Cardiac septum (tissue), 1 donor: ENCODE measurements at regions of chr3 and their contacts with region 1.

Region 1: GRCh38 chr3:8441969-8442559 is 59.6 kb upstream of the LMCD1 start:
- DNase-seq: no peak

Region 2: GRCh38 chr3:8223766-8224165 is 218.3 kb before region 1 on chr3:
- intact Hi-C with region 1: no loop called
- DNase-seq: no peak

Region 3: DNA sequence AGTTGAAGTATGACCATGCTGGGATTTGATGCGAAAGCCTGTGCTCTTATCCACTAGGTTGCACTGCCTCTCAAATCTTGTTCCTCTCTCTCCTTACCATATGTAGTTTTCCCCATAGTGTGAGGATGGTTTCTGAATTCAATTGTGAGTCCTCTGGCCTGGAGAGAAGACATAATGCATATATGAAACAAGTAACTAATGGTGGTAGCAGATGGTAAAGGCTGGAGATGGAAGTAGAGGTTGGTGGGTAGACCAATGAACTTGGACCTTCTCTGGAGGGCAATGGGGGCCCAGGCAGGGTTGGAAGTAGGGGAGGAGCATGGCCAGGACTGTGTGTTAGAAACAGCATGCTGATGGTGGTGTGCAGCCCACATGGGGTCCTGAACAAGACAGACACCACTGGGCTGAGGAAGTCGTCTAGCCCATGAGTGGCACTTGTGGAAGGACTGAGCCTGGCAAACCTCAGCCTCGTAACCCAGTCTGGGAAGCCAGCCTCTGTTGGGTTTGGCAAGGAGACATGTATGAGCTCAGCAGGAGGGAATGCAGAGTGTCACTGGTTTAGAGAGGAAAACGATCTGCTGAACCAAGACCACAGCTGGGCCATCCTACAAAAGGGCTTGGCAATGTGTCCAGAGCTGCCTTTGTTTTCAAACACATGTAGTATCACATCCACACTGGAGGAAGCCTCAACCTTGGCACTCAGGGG is 41.0 kb after region 1 on chr3:
- intact Hi-C with region 1: loop called (anchors 2 kb)
- DNase-seq: peak; percentile 84

Region 4: DNA sequence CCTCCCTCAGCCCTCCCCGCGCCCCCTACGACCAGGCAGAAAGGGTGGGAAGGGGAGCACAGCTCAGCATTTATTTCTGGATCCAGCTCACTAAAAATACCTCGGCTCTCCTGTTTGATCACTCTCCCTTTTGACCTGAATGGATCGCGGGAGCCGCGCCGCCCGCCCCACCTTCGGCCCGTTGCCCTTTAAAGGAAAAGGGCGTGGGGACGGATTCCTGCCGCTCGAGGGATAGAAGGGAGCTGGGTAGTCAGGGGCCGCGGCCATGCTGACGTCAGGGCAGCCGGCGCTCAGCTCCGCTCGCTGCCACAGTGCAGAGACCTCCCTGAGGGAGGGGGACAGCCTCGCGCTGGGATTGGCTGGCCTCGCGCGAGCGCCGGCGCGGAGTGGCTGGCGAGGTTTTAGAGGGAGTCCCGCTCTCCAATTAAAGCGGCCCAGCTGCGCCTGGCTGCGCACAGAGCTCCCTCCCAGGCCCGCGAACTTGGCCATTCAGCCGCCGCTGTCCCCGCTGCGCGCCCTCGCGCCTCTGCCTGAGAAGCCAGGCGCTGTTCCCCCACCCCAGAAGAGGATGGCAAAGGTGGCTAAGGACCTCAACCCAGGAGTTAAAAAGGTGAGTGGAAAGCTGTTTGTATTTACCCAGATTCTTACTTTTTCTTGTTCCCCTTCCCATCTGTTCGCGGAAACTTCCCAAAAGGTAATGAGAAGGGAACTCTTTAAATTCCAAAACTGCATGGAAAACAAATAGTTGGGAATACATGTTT is 59.5 kb after region 1 on chr3 and contains the start of gene LMCD1:
- intact Hi-C with region 1: loop called (anchors 1 kb)
- DNase-seq: peak; percentile 96
- total RNA-seq, gene LMCD1: 57.6 TPM

Region 5: GRCh38 chr3:8560366-8561007 is 118.4 kb after region 1 on chr3:
- intact Hi-C with region 1: loop called (anchors 5 kb)
- DNase-seq: no peak

Region 6: GRCh38 chr3:8607234-8608040 is 165.4 kb after region 1 on chr3:
- intact Hi-C with region 1: loop called (anchors 1 kb)
- DNase-seq: peak; percentile 83

Region 7: GRCh38 chr3:8622873-8623691 is 181.0 kb after region 1 on chr3:
- intact Hi-C with region 1: loop called (anchors 1 kb)
- DNase-seq: peak; percentile 85